Right cardiac atrium (tissue), 5 donors: ENCODE measurements at regions of chr6 and their contacts with region 1.

Region 1: DNA sequence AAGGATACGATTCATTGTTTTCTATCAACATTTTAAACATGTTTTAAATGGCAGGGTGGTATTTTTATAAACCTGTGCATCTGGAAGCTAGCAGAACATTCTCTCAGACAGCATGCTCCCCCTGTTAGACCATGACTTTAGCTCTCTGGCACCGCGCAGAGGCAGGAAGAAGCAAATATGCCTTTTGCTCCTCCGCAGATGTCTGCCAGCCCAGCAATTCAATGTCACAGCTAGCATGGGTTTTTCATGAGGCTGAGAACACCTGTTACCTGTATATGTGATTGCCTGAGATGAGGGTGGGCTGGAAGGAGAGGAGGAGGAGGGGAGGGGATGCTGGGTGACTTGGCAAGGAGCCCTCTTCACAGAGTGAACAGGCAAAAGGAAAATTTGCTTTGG is 6.7 kb downstream of the MTCH1 start:
- DNase-seq: peak; percentile 61 to 76 (median 74)
- ATAC-seq: peak; percentile 38 to 61
- H3K4me3 ChIP-seq: no peak overlapping the region
- H3K27ac ChIP-seq: peak overlapping the region; percentile 33
- H3K4me1 ChIP-seq: peaks cover 24% of the 10 kb centered on the region
- H3K27me3 ChIP-seq: no peaks in the 10 kb centered on the region

Region 2: DNA sequence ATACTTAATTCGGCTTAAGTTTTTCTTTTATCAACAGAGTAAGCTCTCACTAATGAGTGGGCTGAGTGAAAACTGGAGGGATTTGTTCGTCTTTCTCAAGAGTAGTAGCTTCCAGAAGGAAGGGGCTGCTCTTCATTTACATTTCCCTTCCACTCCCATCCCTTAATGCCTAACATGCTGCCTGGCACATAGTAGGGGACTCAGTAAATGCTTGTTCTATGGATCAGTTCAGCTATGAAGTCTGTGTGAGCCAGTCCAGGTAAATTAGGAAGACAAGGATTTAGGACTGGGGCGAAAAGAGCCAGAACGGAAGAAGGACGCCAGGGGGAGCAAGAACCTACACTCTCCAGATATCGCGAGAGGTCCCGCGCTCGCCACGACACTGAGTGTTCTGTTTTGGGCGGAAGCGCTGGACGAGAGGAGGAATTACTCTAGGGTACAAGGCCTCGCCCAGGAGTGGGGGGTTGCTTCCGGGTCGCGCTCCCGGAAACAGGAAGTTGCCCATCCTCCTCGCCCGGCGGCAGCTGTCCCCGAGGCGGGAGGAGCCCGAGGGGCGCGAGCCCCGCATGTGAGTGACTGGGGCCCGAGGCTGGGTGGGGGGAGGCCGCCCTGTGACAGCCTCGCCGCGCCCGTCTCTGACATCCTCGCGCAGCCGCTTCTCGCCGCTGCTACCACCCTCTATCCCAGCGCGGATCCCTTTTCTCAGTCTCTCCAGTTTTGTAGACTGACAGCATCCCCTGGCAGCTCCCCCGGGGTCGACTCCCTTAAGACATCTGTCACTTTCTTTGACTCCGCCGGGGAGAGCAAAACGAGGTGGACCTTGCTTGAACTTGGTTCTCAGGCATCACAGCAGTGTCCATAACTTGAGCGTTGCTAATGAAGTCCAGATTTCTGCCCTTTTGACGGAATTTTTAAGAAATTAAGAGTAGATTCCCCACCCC is 93.6 kb before region 1 on chr6 and contains the start of gene C6orf89:
- intact Hi-C with region 1: loop called in 3 of 4 experiments (anchors 5 kb)
- DNase-seq: peak; percentile 98 to 99 (median 98)
- ATAC-seq: peak; percentile 99 to 100
- H3K4me3 ChIP-seq: peak within 1 kb of the TSS; percentile 93
- H3K27ac ChIP-seq: peak within 1 kb of the TSS; percentile 96
- H3K4me1 ChIP-seq: no peaks in the 10 kb centered on the region
- H3K27me3 ChIP-seq: no peaks in the 10 kb centered on the region
- total RNA-seq, gene C6orf89: 69.4 to 83.9 (median 79.1) TPM

Region 3: GRCh38 chr6:36907781-36908180 is 71.6 kb before region 1 on chr6:
- intact Hi-C with region 1: loop called in 1 of 4 experiments (anchors 10 kb)
- DNase-seq: peak; percentile 60 to 81 (median 72)
- ATAC-seq: peak; percentile 79 to 85
- H3K4me3 ChIP-seq: no peak overlapping the region
- H3K27ac ChIP-seq: peak overlapping the region; percentile 77
- H3K4me1 ChIP-seq: peaks cover 6% of the 10 kb centered on the region
- H3K27me3 ChIP-seq: no peaks in the 10 kb centered on the region